Activated CD4-positive, alpha-beta T cell treated with anti-CD3 and anti-CD28 coated beads for 36 hours (primary cell): ENCODE measurements at regions of chr3 and their contacts with region 1.

Region 1: GRCh38 chr3:49339945-49340800 is at the start of gene USP4:
- DNase-seq: peak; percentile 97
- ATAC-seq: peak; percentile 89
- H3K4me3 Mint-ChIP-seq: peak within 1 kb of the TSS; percentile 99
- H3K27ac Mint-ChIP-seq: peak within 1 kb of the TSS; percentile 96
- H3K4me1 Mint-ChIP-seq: peaks cover 49% of the 10 kb centered on the region
- H3K27me3 Mint-ChIP-seq: no peaks in the 10 kb centered on the region
- total RNA-seq, gene USP4: 69.3 to 71.8 TPM

Region 2: DNA sequence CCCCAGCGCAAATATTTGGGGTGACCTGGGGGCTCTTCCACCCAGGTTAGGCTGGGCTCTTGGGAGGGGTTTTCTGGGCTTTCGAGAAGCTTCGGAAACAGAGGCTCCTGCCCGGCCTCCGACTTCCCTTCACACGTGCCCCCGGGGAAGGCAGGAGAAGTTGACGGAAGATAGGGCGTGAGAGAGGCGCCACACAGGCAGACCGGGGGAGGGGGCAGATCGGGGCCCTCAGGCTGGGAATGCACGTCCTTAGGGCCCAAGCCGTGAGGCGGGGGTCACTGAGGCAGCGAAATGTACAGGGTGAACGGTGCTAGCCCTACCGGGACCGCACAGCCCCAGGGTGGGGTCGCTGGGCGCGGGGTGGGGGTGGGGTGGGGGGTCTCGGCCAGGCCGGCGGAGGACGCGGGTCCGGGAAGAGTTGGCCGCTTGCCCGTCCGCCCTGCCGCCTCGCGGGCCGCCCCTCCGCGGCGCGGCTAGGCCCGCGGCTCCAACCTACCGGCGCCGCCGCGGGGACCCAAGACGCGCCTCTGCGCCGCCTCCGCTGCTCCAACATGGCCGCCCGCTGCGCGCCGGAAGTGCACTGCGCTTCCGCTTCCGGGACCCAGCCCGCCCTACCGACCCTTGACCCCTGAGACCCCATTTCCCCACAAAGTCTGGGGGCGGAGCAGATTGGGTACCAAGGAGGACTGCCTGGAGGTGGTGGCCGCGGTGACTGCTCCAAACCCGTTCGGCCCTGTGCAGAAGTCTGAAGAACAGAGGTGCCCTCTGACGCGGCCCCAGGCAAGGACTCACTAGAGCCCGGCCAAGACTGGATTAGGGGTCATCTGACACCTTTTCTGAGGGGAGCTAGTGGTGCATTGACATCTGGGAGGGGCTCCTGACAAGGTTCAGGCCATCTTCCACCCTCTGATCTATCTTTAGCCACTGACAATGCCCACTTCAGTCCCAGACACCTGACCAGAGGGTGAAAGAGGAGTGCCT is 174.1 kb before region 1 on chr3 and contains the start of gene CCDC71:
- CTCF ChIA-PET with region 1: interaction called, 4 read pairs
- POLR2A ChIA-PET with region 1: no interaction called
- intact Hi-C with region 1: loop called in 1 of 2 experiments (anchors 1 kb)
- DNase-seq: peak; percentile 88
- ATAC-seq: peak; percentile 81
- H3K4me3 Mint-ChIP-seq: peak within 1 kb of the TSS; percentile 90
- H3K27ac Mint-ChIP-seq: peak within 1 kb of the TSS; percentile 89
- H3K4me1 Mint-ChIP-seq: peaks cover 39% of the 10 kb centered on the region
- H3K27me3 Mint-ChIP-seq: no peaks in the 10 kb centered on the region
- total RNA-seq, gene CCDC71: 19.5 to 22.2 TPM

Region 3: DNA sequence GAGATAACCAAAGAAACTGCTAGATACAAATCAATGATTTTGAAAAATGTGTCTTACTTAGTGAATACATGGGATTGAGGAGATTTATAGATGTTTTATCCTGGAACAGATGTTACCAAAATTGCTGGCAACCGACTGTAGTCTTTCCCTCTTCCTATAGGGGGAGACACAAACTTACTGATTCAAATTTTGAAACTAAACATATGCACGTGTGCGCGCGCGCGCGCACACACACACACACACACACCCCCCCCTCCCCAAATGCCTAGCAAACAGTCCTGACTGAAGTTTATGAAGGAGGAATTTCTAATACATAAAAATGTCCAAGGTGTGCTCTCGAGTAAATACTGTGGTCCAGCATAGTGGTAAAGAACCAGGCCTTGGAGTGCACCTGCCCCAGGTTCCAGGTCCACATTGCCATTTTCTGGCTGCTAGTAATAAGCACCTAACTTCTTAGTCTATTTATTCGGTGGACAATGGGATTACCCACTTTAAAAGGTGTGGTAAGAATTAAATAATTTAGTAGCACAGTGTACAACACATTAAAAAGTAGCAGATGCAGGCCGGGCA is 44.6 kb before region 1 on chr3:
- CTCF ChIA-PET with region 1: interaction called, 7 read pairs
- POLR2A ChIA-PET with region 1: no interaction called
- intact Hi-C with region 1: loop called in 1 of 2 experiments (anchors 1 kb)
- DNase-seq: peak; percentile 58
- ATAC-seq: peak; percentile 78
- H3K4me3 Mint-ChIP-seq: no peak overlapping the region
- H3K27ac Mint-ChIP-seq: peak overlapping the region; percentile 42
- H3K4me1 Mint-ChIP-seq: no peaks in the 10 kb centered on the region
- H3K27me3 Mint-ChIP-seq: no peaks in the 10 kb centered on the region

Region 4: GRCh38 chr3:49377483-49377882 is 37.3 kb after region 1 on chr3:
- CTCF ChIA-PET with region 1: interaction called, 5 read pairs
- POLR2A ChIA-PET with region 1: no interaction called
- intact Hi-C with region 1: loop called in 1 of 2 experiments (anchors 2 kb)
- DNase-seq: peak; percentile 85
- ATAC-seq: peak; percentile 96
- H3K4me3 Mint-ChIP-seq: no peak overlapping the region
- H3K27ac Mint-ChIP-seq: peak overlapping the region; percentile 91
- H3K4me1 Mint-ChIP-seq: peaks cover 42% of the 10 kb centered on the region
- H3K27me3 Mint-ChIP-seq: no peaks in the 10 kb centered on the region

Region 5: GRCh38 chr3:49454458-49454857 is 114.3 kb after region 1 on chr3:
- CTCF ChIA-PET with region 1: interaction called, 24 read pairs
- POLR2A ChIA-PET with region 1: interaction called, 4 read pairs
- intact Hi-C with region 1: loop called (anchors 1 kb)
- DNase-seq: no peak
- ATAC-seq: no peak
- H3K4me3 Mint-ChIP-seq: no peak overlapping the region
- H3K27ac Mint-ChIP-seq: no peak overlapping the region
- H3K4me1 Mint-ChIP-seq: no peaks in the 10 kb centered on the region
- H3K27me3 Mint-ChIP-seq: no peaks in the 10 kb centered on the region